ENCODE measurements at regions of chr22 and their contacts with region 1.

Region 1: DNA sequence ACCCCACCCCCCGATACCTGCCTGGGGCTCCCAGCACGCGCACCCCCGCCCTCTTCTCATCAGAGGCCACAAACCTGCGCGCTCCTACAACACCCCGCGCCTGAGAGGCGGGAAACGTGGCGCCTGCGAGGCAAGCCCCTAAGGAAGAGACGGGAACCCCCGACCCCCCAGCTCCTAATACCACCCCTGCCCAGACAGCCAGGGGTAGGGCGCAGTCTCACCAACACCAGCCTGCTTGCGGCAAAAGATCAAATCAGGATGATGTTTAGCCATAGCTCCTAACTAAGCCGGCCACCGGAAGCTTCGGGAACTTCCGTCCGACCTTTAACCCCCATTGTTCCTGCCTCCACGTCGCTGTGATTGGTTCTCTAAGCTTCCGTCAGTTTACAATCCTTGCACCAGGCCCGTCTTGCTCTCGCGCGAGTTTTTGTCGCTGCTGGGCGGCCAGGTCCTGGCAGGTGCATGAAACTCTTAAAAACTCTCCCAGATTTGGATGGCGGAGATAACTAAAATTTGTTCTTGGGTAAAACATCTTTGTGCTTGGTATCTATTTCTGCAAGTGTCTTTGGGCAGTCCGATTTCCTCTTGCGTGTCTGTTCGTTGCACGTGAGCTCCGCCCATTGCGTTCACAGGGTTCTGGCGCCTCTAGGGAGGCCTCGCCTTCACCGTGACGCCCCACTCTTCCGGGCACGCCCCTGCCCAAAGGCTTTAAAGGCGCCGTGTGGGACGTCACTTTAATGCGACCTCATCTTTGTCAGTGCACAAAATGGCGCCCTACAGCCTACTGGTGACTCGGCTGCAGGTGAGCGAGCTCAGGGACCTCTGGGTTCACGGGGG is at the starts of genes ACO2 and PHF5A:
- DNase-seq: peak; percentile 99
- H3K4me3 ChIP-seq: peak within 1 kb of the TSS; percentile 78 to 96 (median 81)
- H3K27ac ChIP-seq: peak within 1 kb of the TSS; percentile 83
- H3K4me1 ChIP-seq: peaks cover 17% of the 10 kb centered on the region
- H3K27me3 ChIP-seq: no peaks in the 10 kb centered on the region
- CTCF ChIP-seq: no peak
- POLR2A ChIP-seq: peak; percentile 64
- total RNA-seq, gene ACO2: 79.1 and 79.7 TPM in 2 replicates
- total RNA-seq, gene PHF5A: 55.9 and 63.7 TPM in 2 replicates

Region 2: DNA sequence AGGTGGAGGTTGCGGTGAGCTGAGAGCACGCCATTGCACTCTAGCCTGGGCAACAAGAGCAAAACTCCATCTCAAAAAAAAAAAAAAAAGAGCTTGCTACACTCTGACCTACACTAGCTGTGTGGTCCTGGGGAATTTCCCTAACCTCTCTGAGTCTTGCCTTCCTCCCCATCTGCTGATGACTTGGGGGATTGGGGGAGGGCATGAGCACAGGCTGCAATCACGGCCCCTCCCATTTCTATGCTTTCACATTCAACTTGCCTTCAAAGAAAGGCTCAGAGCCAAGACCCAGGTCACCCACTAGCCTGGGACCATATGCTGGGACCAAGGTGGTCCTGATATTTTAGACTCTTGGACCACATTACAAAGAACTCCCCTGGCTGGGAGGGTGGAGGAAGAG is 126.6 kb before region 1 on chr22:
- CTCF ChIA-PET with region 1: no interaction called
- POLR2A ChIA-PET with region 1: no interaction called
- dilution Hi-C with region 1: no loop called
- intact Hi-C with region 1: no loop called
- DNase-seq: no peak
- H3K4me3 ChIP-seq: no peak overlapping the region
- H3K27ac ChIP-seq: no peak overlapping the region
- H3K4me1 ChIP-seq: peaks cover 13% of the 10 kb centered on the region
- H3K27me3 ChIP-seq: no peaks in the 10 kb centered on the region
- CTCF ChIP-seq: no peak
- POLR2A ChIP-seq: no peak

Region 3: DNA sequence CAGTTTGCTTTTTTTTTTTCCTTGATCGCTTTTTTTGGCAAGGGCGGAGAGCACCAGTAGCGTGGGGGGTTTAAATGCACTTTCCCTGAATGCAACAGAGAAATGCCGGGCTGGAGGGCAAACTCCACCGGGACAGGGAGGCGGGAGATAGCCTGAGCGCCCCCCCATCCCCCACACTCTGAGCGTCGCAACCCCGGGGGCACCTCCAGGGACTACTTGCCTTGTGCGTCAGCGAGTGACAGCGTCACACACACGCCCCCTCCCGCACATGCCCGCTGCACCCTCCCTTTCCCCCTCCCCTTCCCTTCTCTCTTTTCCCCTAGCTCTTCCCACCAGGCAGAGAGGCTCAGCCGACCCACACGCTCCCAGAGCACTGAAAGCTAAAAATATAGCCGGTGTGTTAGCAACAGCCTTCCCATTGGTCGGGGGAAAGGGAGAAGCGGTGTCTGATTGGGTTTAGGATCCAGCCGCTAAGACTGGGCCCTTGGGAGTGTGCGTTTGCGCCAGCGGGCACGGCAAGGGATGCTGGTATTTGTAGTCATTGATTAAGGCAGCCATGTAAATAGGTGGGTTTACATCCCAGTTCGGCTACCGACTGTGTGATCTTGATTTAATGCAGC is 20.3 kb before region 1 on chr22:
- CTCF ChIA-PET with region 1: interaction called, 9 read pairs
- POLR2A ChIA-PET with region 1: interaction called, 11 read pairs
- dilution Hi-C with region 1: no loop called
- intact Hi-C with region 1: loop called (anchors 1 kb)
- DNase-seq: peak; percentile 100
- H3K4me3 ChIP-seq: peak overlapping the region; percentile 83 to 96 (median 95)
- H3K27ac ChIP-seq: peak overlapping the region; percentile 83
- H3K4me1 ChIP-seq: peaks cover 4% of the 10 kb centered on the region
- H3K27me3 ChIP-seq: no peaks in the 10 kb centered on the region
- CTCF ChIP-seq: no peak
- POLR2A ChIP-seq: peak; percentile 19